ENCODE measurements at regions of chr3 and their contacts with region 1.

Region 1: GRCh38 chr3:129934234-129935123 is 40.0 kb upstream of the TRH start:
- DNase-seq: no peak
- ATAC-seq: peak; percentile 61 to 64

Region 2: GRCh38 chr3:129224984-129225393 is 709.5 kb before region 1 on chr3:
- intact Hi-C with region 1: no loop called
- DNase-seq: peak; percentile 90
- ATAC-seq: peak; percentile 94 to 96

Region 3: DNA sequence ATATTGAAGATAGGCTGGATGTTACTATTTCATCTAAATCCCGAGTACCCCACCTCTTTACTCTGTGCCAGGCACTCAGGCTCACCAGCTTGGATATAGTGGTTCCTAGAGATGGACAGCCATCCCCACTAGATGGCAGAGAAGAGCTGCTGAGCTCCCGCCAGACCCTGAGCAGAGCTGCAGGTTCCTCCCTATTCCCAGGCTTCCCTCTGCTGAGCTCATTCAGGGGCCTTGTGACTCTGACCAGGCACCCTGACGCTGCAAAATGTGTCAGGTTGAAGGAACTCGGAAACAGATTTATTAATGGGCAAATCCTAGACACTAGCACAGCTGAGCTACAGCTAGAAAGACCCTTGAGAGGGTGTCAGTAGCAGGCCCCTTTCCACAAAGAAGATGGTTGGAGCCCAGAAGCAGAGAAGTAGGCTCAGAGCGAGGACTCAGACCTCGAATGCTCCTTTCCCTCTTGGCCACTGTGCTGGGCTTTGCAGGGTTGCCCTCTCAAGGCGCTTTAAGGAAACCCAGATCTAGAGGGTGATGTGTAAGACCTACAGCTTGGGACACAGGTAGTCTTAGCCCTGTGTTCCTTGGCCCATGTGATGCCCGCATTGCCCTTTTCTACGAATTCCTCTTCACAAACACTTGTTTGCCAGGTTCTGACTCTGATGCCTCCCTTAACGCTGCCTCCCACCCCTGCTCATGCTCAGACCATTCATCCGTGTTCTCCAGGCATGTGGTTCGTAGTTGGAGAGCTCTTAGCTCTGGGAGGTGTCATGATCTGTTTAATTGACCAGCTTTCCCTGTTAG is 444.0 kb before region 1 on chr3:
- intact Hi-C with region 1: loop called in 1 of 2 experiments (anchors 10 kb)
- DNase-seq: peak; percentile 83
- ATAC-seq: peak; percentile 90

Region 4: DNA sequence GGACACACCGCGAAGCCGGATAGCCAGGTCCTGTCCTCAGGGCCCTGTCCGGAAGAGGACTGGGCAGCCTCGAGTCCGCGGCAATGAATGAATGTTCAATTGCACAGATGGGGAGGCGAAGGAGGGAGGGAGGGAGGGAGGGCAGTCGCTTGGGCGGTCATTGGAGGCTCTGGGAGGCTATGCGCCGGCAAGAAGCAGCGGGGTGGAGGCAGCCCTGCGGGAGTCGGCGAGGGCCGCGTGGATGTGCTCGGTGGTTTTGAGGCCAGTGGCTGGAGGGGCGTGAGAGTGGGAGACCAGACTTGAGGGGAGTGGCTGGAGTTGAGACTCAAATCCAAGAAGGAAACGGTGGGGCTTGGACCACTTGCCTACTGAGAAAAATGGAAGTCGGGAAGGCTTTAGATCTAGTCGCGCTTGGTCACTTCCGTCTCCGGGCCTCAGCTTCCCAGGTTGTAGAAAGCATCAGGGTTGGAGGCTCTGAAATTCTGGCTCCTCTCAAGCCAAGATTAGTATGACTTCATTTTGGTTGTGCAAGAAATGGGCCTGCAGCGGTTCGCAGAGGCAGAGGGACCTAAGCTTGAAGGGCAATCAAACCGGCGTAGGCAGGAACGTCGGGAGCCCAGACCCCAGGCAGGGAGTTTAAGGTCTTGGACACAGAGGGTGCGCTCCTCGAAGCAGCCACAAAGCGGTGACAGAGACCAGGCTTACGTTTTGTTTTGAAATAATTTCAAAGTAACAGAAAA is 306.9 kb before region 1 on chr3:
- intact Hi-C with region 1: loop called (anchors 2 to 10 kb)
- DNase-seq: peak; percentile 71
- ATAC-seq: peak; percentile 44 to 50

Region 5: DNA sequence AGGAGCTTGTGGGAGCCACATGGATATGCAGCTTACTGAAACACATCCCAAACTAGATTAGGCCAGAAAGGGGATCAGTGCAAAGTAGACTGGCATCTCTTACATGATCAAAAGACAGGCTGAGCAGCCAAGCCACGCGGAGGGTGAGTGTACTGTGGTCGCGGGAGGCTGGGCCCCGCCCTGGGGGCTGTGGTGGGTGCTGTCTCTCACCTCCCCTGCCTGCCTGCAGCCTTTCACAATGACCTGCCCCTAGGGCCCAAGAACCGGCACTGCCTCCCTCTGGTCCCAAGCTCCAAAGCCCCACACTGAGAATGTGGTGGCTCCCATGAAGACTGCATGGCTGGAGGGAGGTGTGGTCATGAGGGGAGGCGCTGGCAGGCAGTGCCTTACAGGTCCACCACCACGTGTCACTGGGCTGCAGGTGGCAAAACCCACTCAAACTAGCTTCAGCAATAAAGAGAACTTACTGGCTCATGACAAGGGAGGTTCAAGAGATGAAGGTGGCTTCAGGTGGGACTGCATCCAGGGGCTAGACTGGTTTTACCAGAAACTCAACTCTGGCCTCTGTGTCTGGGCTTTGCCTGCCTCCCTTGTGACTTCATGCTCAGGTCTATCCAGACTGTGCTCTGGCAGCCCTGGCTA is 300.6 kb before region 1 on chr3:
- intact Hi-C with region 1: loop called (anchors 2 to 10 kb)
- DNase-seq: no peak
- ATAC-seq: no peak

Region 6: DNA sequence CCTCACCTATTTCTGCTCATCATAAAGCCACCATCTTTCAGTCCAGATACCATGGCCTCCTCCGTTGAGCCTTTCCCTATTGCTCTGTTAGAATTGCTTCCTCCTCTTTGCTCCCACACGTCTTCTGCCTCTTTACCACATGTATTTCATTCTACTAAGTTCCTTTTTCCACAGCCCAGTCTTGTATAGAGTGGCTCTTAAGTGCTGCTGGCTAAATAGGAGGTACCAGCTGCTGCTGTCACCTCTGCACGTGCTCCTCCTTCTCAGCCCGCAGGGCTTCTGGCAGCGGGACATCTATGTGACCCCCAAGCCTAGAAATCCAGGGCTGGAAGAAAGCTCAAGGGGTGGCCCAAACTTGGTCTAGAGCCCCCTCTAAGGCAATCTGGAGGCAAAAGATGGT is 289.2 kb before region 1 on chr3:
- intact Hi-C with region 1: loop called in 1 of 2 experiments (anchors 5 kb)
- DNase-seq: no peak
- ATAC-seq: no peak

Region 7: GRCh38 chr3:129824926-129825541 is 109.4 kb before region 1 on chr3:
- intact Hi-C with region 1: loop called in 1 of 2 experiments (anchors 10 kb)
- DNase-seq: peak; percentile 29
- ATAC-seq: peak in 1 of 2 donors; percentile 33

Region 8: DNA sequence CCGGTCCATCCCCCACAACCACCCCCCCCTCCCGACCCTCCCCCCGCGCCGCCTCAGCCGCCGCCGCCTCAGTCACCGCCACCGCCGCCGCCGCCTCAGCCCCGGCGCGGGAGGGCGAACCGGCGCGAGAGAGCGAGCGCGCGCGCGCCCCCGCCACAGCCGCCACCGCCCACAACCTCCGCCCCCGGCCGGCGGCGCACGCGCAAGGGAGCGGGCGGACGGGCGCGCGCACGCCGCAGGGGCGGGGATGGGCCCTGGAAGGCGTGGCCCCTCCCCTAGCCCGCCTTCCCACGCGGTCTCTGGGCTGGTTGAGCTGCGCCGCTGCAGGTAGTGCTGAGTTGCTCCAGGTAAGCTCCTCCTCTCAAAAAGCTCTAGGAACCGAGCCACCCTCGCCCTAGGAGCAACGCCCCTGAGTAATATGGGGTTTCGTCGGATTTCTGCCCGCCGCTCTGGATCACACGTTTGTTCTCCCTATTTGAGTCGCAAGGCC is 40.9 kb before region 1 on chr3 and contains the start of gene TMCC1:
- intact Hi-C with region 1: no loop called
- DNase-seq: peak; percentile 85
- ATAC-seq: peak; percentile 96 to 98
- total RNA-seq, gene TMCC1: 30.0 to 34.2 TPM

Measured in left cardiac atrium (tissue), 4 donors.